Lower lobe of right lung (tissue), 2 donors: ENCODE measurements at regions of chr11 and their contacts with region 1.

Region 1: GRCh38 chr11:41461057-41461681 is 1.7 kb upstream of the LRRC4C start:
- DNase-seq: no peak
- ATAC-seq: no peak
- H3K4me3 ChIP-seq: no peak overlapping the region
- H3K27ac ChIP-seq: no peak overlapping the region
- H3K4me1 ChIP-seq: no peaks in the 10 kb centered on the region
- H3K27me3 ChIP-seq: peaks cover 15% of the 10 kb centered on the region
- CTCF ChIP-seq: peak; percentile 67

Region 2: GRCh38 chr11:41273908-41274307 is 187.3 kb before region 1 on chr11:
- intact Hi-C with region 1: no loop called
- DNase-seq: no peak
- ATAC-seq: no peak
- H3K4me3 ChIP-seq: no peak overlapping the region
- H3K27ac ChIP-seq: no peak overlapping the region
- H3K4me1 ChIP-seq: no peaks in the 10 kb centered on the region
- H3K27me3 ChIP-seq: no peaks in the 10 kb centered on the region
- CTCF ChIP-seq: no peak

Region 3: DNA sequence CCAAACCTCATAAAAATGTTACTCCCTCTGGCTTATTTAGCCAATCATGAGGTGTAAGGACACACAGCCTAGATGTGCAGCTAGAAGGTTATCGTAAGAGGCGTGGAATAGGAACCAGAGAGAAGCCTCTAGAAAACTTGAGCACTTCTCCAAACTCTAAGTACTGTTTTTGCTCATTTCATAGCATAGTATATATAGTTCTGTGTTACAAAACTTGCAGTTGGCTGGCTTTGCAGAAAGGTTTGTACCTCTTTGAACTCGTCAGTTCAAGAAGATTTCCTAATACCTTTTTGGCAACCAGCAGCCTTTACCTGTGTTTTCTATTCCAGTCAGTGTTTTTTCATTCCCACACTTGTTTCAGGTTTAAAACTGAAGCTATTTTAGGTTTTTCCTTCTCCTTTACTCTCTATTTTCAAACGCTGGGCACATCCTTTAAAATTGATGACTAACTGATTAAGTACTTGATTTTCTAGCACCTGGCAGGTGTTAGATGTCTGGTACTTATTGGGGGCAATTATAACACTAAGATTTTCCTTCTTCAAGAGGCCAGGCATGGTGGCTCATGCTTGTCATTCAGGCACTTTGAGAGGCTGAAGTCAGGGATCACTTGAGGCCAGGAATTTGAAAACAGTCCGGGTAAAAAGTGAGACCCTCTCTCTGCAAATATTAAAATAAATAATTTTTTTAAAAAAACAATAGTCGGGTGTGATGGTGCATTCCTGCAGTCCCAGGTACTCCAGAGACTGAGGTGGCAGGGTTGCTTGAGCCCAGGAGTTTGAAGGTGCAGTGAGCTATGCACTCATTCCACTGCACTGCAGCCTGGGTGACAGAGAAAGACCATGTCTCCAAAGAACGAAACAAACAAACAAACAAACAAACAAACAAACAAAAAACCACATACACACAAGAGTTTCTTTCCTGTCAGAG is 126.9 kb before region 1 on chr11:
- intact Hi-C with region 1: no loop called
- DNase-seq: no peak
- ATAC-seq: peak; percentile 72 to 82
- H3K4me3 ChIP-seq: no peak overlapping the region
- H3K27ac ChIP-seq: no peak overlapping the region
- H3K4me1 ChIP-seq: no peaks in the 10 kb centered on the region
- H3K27me3 ChIP-seq: no peaks in the 10 kb centered on the region
- CTCF ChIP-seq: no peak

Region 4: GRCh38 chr11:42524534-42525227 is 1063.5 kb after region 1 on chr11:
- intact Hi-C with region 1: loop called (anchors 5 kb)
- DNase-seq: no peak
- ATAC-seq: peak; percentile 76 to 77
- H3K4me3 ChIP-seq: no peak overlapping the region
- H3K27ac ChIP-seq: no peak overlapping the region
- H3K4me1 ChIP-seq: no peaks in the 10 kb centered on the region
- H3K27me3 ChIP-seq: no peaks in the 10 kb centered on the region
- CTCF ChIP-seq: peak; percentile 75